Panc1 (cell line): ENCODE measurements at regions of chr1 and their contacts with region 1.

Region 1: GRCh38 chr1:234309598-234310459 is 63.4 kb upstream of the COA6 start:
- DNase-seq: peak; percentile 45
- ATAC-seq: peak; percentile 92
- H3K4me3 ChIP-seq: peak overlapping the region; percentile 12 to 14
- H3K27ac ChIP-seq: 0 out of 2 replicates have a peak overlapping the region, but pooled peaks have one; percentile 32
- H3K4me1 ChIP-seq: peaks cover 13% of the 10 kb centered on the region
- H3K27me3 ChIP-seq: no peaks in the 10 kb centered on the region
- CTCF ChIP-seq: peak; percentile 95

Region 2: GRCh38 chr1:234154320-234155251 is 155.2 kb before region 1 on chr1:
- CTCF ChIA-PET with region 1: interaction called, 3 read pairs
- POLR2A ChIA-PET with region 1: no interaction called
- in situ Hi-C with region 1: no loop called
- intact Hi-C with region 1: loop called (anchors 5 kb)
- DNase-seq: peak; percentile 54
- ATAC-seq: peak; percentile 97
- H3K4me3 ChIP-seq: no peak overlapping the region
- H3K27ac ChIP-seq: no peak overlapping the region
- H3K4me1 ChIP-seq: no peaks in the 10 kb centered on the region
- H3K27me3 ChIP-seq: no peaks in the 10 kb centered on the region
- CTCF ChIP-seq: peak; percentile 84

Region 3: GRCh38 chr1:234212764-234213657 is 96.8 kb before region 1 on chr1:
- CTCF ChIA-PET with region 1: interaction called, 9 read pairs
- POLR2A ChIA-PET with region 1: no interaction called
- in situ Hi-C with region 1: no loop called
- intact Hi-C with region 1: loop called (anchors 5 kb)
- DNase-seq: peak; percentile 24
- ATAC-seq: peak; percentile 62
- H3K4me3 ChIP-seq: no peak overlapping the region
- H3K27ac ChIP-seq: no peak overlapping the region
- H3K4me1 ChIP-seq: peaks cover 16% of the 10 kb centered on the region
- H3K27me3 ChIP-seq: no peaks in the 10 kb centered on the region
- CTCF ChIP-seq: peak; percentile 80

Region 4: GRCh38 chr1:234478481-234479309 is 168.9 kb after region 1 on chr1 and contains the start of gene TARBP1:
- CTCF ChIA-PET with region 1: no interaction called
- POLR2A ChIA-PET with region 1: no interaction called
- in situ Hi-C with region 1: no loop called
- intact Hi-C with region 1: no loop called
- DNase-seq: no peak
- ATAC-seq: peak; percentile 90
- H3K4me3 ChIP-seq: peak within 1 kb of the TSS; percentile 73 to 81
- H3K27ac ChIP-seq: peak within 1 kb of the TSS; percentile 92
- H3K4me1 ChIP-seq: peaks cover 38% of the 10 kb centered on the region
- H3K27me3 ChIP-seq: no peaks in the 10 kb centered on the region
- CTCF ChIP-seq: peak; percentile 48
- total RNA-seq, gene TARBP1: 45.0 TPM

Region 5: DNA sequence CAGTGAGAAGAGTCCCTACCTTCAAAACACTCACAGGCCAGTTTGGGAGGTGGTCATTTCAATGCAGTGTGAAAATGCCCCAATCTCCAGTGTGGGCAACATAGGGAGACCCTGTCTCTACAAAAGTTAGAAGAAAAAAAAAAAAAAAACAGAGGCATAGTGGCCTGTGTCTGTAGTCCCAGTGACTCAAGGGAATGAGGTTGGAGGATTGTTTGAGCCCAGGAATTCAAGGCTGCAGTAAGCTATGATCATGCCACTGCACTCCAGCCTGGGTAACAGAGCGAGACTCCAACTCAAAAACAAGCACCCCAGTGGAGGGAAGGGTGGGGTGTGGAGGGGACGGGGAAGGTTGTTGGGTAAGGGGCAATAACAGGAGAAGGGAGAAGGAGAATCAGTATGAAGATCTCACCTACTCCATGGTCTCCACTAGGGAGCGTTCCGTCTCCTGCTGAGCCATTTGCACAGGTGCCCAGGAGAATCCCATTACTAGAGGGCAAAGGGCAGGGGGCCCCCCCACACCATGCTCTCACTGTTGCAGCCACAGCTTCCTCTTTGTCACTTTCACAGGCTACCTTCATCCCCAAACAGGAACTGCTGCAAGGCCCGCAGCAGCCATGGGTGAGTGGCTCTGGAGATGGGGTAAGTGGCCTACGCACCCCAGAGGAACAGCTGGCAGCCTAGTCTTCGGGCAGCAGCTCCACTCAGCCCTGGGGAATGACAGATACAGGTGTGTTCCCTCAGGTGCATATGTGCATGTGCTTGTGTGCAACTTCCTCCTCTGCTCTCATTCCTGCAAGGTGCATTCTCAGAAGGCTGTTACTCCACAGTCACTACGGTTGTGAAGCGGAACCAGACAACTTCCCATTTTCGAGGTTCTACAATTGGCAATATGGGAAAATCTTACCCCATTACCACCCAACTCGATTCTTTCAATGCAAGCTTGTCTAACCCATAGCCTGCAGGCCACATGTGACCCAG is 1644.8 kb after region 1 on chr1:
- CTCF ChIA-PET with region 1: no interaction called
- POLR2A ChIA-PET with region 1: no interaction called
- in situ Hi-C with region 1: no loop called
- intact Hi-C with region 1: no loop called
- DNase-seq: no peak
- ATAC-seq: peak; percentile 25
- H3K4me3 ChIP-seq: no peak overlapping the region
- H3K27ac ChIP-seq: peak overlapping the region; percentile 18
- H3K4me1 ChIP-seq: no peaks in the 10 kb centered on the region
- H3K27me3 ChIP-seq: no peaks in the 10 kb centered on the region
- CTCF ChIP-seq: no peak